WTC11 (cell line): ENCODE measurements at regions of chr20 and their contacts with region 1.

Region 1: DNA sequence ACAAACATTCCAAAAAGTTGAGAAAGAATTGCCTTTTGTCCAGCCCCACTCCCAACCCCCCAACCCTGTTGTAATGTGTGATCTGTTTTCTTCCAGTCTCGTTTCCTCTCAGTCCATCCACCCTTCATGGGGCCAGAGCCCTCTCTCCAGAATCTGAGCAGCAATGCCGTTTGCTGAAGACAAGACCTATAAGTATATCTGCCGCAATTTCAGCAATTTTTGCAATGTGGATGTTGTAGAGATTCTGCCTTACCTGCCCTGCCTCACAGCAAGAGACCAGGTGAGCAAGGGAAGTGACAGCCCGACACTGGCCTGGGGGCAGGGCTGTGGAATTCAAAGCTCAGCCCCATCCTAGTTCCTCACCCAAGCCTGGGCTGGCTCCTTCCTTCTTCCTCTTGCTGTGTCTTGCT is 7.8 kb downstream of the MAVS start:
- DNase-seq: peak; percentile 22
- ATAC-seq: peak; percentile 71
- H3K4me3 Mint-ChIP-seq: no peak overlapping the region
- H3K27ac Mint-ChIP-seq: peak overlapping the region; percentile 36; the same call in 1 of the 2 replicates
- H3K4me1 Mint-ChIP-seq: peaks cover 3% of the 10 kb centered on the region; the same call in 1 of the 2 replicates
- H3K27me3 Mint-ChIP-seq: no peaks in the 10 kb centered on the region
- CTCF ChIP-seq: no peak

Region 2: GRCh38 chr20:3786665-3787323 is 67.7 kb before region 1 on chr20 and contains the start of gene CENPB:
- CTCF ChIA-PET with region 1: interaction called, 15 read pairs
- POLR2A ChIA-PET with region 1: no interaction called
- DNase-seq: peak; percentile 89
- ATAC-seq: peak; percentile 81
- H3K4me3 Mint-ChIP-seq: peak within 1 kb of the TSS; percentile 83
- H3K27ac Mint-ChIP-seq: no peak within 1 kb of the TSS
- H3K4me1 Mint-ChIP-seq: peaks cover 20% of the 10 kb centered on the region
- H3K27me3 Mint-ChIP-seq: peaks cover 24% of the 10 kb centered on the region
- CTCF ChIP-seq: peak; percentile 65; the same call in 1 of the 2 replicates
- total RNA-seq, gene CENPB: 55.3 to 58.7 TPM (median 57.6 TPM) in 3 replicates

Region 3: GRCh38 chr20:3866466-3866916 is 12.0 kb after region 1 on chr20:
- CTCF ChIA-PET with region 1: interaction called, 26 read pairs
- POLR2A ChIA-PET with region 1: no interaction called
- DNase-seq: no peak
- ATAC-seq: no peak
- H3K4me3 Mint-ChIP-seq: no peak overlapping the region
- H3K27ac Mint-ChIP-seq: no peak overlapping the region
- H3K4me1 Mint-ChIP-seq: no peaks in the 10 kb centered on the region
- H3K27me3 Mint-ChIP-seq: no peaks in the 10 kb centered on the region
- CTCF ChIP-seq: no peak